ENCODE measurements at regions of chr10 and their contacts with region 1.

Region 1: GRCh38 chr10:68074775-68075549 is at the start of gene HERC4:
- DNase-seq: peak; percentile 97
- H3K4me3 ChIP-seq: peak within 1 kb of the TSS; percentile 95
- H3K27ac ChIP-seq: peak within 1 kb of the TSS; percentile 93
- H3K4me1 ChIP-seq: peaks cover 5% of the 10 kb centered on the region
- H3K27me3 ChIP-seq: no peaks in the 10 kb centered on the region
- total RNA-seq, gene HERC4: 228 and 289 TPM in 2 replicates

Region 2: DNA sequence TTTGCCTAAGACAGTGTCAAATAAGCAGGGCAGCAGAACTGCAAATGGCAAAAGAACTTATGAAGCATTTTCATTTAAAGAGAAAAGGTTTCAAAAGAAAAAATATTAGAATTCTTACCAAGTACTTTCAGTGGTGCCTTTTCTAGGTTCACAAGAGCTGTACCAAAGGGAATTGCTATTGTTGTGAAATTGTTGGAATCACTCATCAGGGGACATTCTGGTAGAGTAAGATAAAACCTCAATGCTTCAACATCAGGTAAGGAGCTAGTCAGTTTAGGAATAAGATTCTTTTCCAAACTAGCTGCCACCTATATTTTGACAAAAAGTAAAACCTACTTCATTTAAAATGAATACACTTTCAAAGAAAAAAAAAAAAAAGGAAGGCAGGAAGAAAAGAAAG is 84.9 kb before region 1 on chr10:
- in situ Hi-C with region 1: no loop called
- DNase-seq: peak; percentile 27
- H3K4me3 ChIP-seq: no peak overlapping the region
- H3K27ac ChIP-seq: peak overlapping the region; percentile 36; the same call in 1 of the 2 replicates
- H3K4me1 ChIP-seq: peaks cover 12% of the 10 kb centered on the region; the same call in 1 of the 2 replicates
- H3K27me3 ChIP-seq: no peaks in the 10 kb centered on the region

Region 3: DNA sequence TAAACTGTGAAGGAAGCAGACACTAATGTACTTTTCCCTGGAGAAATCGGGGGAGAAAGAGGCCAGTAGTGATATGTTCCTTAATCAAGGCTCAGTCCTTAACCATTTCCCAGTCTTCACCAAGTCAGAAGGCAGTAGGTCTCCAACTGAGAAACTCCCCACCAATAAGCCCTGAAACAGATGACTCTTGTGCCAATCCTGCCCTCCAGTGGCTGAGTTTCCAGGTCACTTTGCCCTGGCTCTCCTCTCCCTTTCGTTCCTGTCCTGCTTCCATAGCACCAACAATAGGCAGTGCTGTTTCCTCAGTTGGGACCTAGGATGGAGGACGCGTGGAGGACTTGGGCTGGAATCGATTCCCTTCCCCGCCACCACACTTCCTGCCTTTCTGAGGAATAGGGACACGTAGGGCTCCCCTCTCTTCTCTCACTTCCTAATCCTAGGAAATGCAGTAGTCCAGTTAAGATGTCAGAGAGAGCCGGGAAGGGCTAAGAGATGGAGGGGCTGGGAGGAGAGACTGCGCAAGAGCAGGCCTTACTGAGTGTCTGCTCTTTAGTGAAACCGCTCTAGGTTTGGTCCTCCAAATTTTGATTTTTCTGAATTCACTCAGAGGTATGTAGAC is 133.6 kb after region 1 on chr10:
- in situ Hi-C with region 1: loop called (anchors 5 kb)
- DNase-seq: peak; percentile 81
- H3K4me3 ChIP-seq: no peak overlapping the region
- H3K27ac ChIP-seq: peak overlapping the region; percentile 5; the same call in 1 of the 2 replicates
- H3K4me1 ChIP-seq: peaks cover 4% of the 10 kb centered on the region; the same call in 1 of the 2 replicates
- H3K27me3 ChIP-seq: no peaks in the 10 kb centered on the region